ENCODE measurements at regions of chr16 and their contacts with region 1.

Region 1: DNA sequence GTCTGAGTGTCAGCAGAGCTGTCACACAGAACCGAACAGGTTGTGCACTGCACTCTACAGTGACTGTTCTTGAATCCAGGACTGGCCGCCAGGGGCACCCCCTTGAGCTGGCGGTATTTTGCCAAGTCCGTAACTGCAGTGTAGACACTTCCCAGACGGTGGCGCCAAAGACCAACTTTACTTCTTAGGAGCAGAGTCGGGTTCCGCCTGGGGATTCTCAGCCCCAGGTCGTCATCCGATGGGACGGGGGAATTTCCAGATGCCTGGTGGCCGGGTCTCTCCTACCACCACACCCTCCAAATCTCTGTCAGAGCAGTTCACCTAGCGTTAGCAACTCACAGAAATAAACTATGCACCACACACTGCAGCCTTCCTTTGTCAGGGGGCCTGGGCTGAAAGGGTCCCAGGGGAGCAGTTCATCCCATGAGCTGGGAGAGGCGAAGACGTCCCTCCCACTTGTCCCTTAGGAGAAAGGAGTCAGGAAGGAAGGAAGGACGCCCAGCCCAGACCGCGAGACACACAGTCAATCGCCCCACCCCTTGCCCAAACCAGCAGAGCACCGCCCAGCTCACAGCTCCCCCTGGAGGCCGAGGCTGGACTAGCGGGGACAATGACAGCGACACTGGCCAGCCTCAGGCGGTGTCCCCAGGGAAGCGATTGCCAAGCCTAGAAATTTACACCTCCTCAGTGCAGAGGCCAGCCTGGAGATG is 7.4 kb upstream of the RIPOR1 start:
- DNase-seq: peak; percentile 94 to 97 (median 95)
- ATAC-seq: peak; percentile 88 to 95 (median 93)
- H3K4me3 ChIP-seq: peak overlapping the region in 10 of 12 donors; percentile 23 to 57 (median 46)
- H3K27ac ChIP-seq: peak overlapping the region; percentile 51 to 93 (median 88)
- H3K4me1 ChIP-seq: peaks cover 0 to 25% (median 7%) of the 10 kb centered on the region in 12 donors
- H3K27me3 ChIP-seq: no peaks in the 10 kb centered on the region
- CTCF ChIP-seq: peak; percentile 67 to 89 (median 76)
- POLR2A ChIP-seq: peak in 1 of 2 donors; percentile 35

Region 2: DNA sequence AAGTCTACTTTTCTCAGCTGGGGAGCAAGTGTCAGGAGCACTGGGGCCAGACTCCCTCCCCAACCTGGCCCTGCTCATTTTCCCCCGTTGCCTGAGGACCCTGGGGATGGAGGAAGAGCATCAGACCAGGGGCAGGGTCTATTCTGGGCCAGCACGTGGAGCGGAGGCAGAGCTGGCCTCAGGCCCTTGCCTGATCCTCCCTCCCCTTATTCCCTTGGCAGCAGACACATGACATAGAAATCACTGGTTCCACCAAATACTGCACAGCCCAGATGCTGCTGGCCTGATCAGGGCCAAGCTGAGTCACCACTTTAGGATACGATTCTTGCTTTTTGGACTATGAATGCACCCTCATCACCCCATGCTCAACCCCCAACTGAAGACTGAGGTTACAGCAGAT is 22.1 kb before region 1 on chr16:
- intact Hi-C with region 1: loop called in 1 of 10 experiments (anchors 2 kb)
- DNase-seq: peak in 2 of 5 donors; percentile 29 to 59
- ATAC-seq: peak in 3 of 4 donors; percentile 70 to 74 (median 73)
- H3K4me3 ChIP-seq: no peak overlapping the region
- H3K27ac ChIP-seq: peak overlapping the region in 1 of 12 donors; percentile 24
- H3K4me1 ChIP-seq: peaks cover 0 to 16% (median 4%) of the 10 kb centered on the region in 12 donors
- H3K27me3 ChIP-seq: no peaks in the 10 kb centered on the region
- CTCF ChIP-seq: no peak
- POLR2A ChIP-seq: no peak

Region 3: DNA sequence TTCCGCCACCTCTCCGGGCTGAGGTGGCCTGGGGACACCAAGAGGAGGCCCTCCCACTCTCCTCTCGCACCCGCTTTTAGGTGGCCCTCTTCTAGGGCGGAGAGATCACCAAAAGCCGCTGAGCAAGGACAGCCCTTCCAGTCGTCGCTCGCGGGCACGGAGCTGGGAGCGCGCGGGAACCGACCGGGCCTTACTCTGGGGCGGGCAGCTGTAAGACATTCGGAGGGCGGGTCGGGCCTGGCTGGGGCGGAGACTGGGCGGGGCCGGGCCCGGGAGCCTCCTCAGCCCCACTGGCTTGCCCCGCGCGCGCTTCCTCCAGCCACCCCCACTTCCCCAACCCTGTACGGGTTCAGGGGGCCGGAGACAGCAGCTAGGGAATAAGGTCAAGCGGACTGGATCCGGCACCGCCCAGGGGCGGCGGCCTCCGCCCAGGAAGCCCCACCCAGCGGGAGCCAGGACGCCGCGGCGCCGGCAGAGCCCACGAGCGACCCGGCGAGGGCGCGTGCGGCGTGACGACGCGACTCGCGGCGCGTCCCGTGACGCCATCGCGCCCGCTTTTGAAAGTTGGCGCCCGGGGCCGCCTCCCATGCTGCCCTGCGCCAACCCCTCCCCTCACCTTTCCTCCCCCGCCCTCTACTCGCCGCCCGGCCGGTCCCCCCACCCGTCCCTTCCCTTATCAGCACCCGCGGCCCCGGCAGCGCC is 40.7 kb after region 1 on chr16:
- intact Hi-C with region 1: loop called in 6 of 10 experiments (anchors 1 to 5 kb)
- DNase-seq: peak; percentile 97 to 99 (median 98)
- ATAC-seq: peak; percentile 91 to 96 (median 92)
- H3K4me3 ChIP-seq: peak overlapping the region; percentile 74 to 99 (median 95)
- H3K27ac ChIP-seq: peak overlapping the region; percentile 95 to 100 (median 99)
- H3K4me1 ChIP-seq: peaks cover 7 to 40% (median 28%) of the 10 kb centered on the region in 12 donors
- H3K27me3 ChIP-seq: no peaks in the 10 kb centered on the region
- CTCF ChIP-seq: no peak
- POLR2A ChIP-seq: peak in 1 of 2 donors; percentile 71

Region 4: GRCh38 chr16:67653128-67653786 is 132.0 kb after region 1 on chr16:
- intact Hi-C with region 1: loop called in 3 of 10 experiments (anchors 5 kb)
- DNase-seq: peak in 1 of 5 donors; percentile 60
- ATAC-seq: no peak
- H3K4me3 ChIP-seq: peak overlapping the region; percentile 16 to 56 (median 42)
- H3K27ac ChIP-seq: no peak overlapping the region
- H3K4me1 ChIP-seq: peaks cover 0 to 31% (median 9%) of the 10 kb centered on the region in 12 donors
- H3K27me3 ChIP-seq: peaks cover 24 to 68% (median 47%) of the 10 kb centered on the region in 9 donors
- CTCF ChIP-seq: peak in 2 of 12 donors; percentile 8 to 30
- POLR2A ChIP-seq: no peak

Region 5: GRCh38 chr16:67736858-67737257 is 215.6 kb after region 1 on chr16:
- intact Hi-C with region 1: no loop called
- DNase-seq: no peak
- ATAC-seq: peak in 1 of 4 donors; percentile 26
- H3K4me3 ChIP-seq: no peak overlapping the region
- H3K27ac ChIP-seq: no peak overlapping the region
- H3K4me1 ChIP-seq: no peaks in the 10 kb centered on the region
- H3K27me3 ChIP-seq: no peaks in the 10 kb centered on the region
- CTCF ChIP-seq: no peak
- POLR2A ChIP-seq: no peak

Region 6: GRCh38 chr16:67806428-67807147 is 285.3 kb after region 1 on chr16 and contains the starts of genes RANBP10 and TSNAXIP1:
- intact Hi-C with region 1: loop called in 3 of 10 experiments (anchors 5 to 10 kb)
- DNase-seq: peak; percentile 97 to 98 (median 98)
- ATAC-seq: peak; percentile 98 to 99 (median 98)
- H3K4me3 ChIP-seq: peak within 1 kb of the TSS; percentile 62 to 98 (median 80)
- H3K27ac ChIP-seq: peak within 1 kb of the TSS in 11 of 12 donors; percentile 68 to 93 (median 84)
- H3K4me1 ChIP-seq: peaks cover 0 to 39% (median 17%) of the 10 kb centered on the region in 12 donors
- H3K27me3 ChIP-seq: no peaks in the 10 kb centered on the region
- CTCF ChIP-seq: no peak
- POLR2A ChIP-seq: peak in 1 of 2 donors; percentile 91
- total RNA-seq, gene RANBP10: 7.1 to 19.7 (median 12.3) TPM
- total RNA-seq, gene TSNAXIP1: 0.16 to 0.93 (median 0.46) TPM in 8 of 9 donors, not detected in the other

Region 7: GRCh38 chr16:67935402-67936123 is 414.3 kb after region 1 on chr16:
- intact Hi-C with region 1: loop called in 2 of 10 experiments (anchors 10 kb)
- DNase-seq: peak; percentile 95 to 96 (median 95)
- ATAC-seq: peak; percentile 89 to 93 (median 92)
- H3K4me3 ChIP-seq: peak overlapping the region; percentile 57 to 98 (median 77)
- H3K27ac ChIP-seq: peak overlapping the region; percentile 82 to 99 (median 92)
- H3K4me1 ChIP-seq: peaks cover 0 to 42% (median 23%) of the 10 kb centered on the region in 12 donors
- H3K27me3 ChIP-seq: no peaks in the 10 kb centered on the region
- CTCF ChIP-seq: no peak
- POLR2A ChIP-seq: peak; percentile 13 to 68

Region 8: GRCh38 chr16:68064791-68065365 is 543.6 kb after region 1 on chr16:
- intact Hi-C with region 1: loop called in 1 of 10 experiments (anchors 10 kb)
- DNase-seq: peak; percentile 59 to 82 (median 75)
- ATAC-seq: peak; percentile 49 to 80 (median 78)
- H3K4me3 ChIP-seq: no peak overlapping the region
- H3K27ac ChIP-seq: peak overlapping the region in 10 of 12 donors; percentile 5 to 76 (median 32)
- H3K4me1 ChIP-seq: peaks cover 0 to 49% (median 19%) of the 10 kb centered on the region in 12 donors
- H3K27me3 ChIP-seq: no peaks in the 10 kb centered on the region
- CTCF ChIP-seq: peak; percentile 67 to 87 (median 79)
- POLR2A ChIP-seq: no peak